Ovary (tissue), 10 donors: ENCODE measurements at regions of chr13 and their contacts with region 1.

Region 1: GRCh38 chr13:43786773-43787517 is at the start of gene ENOX1:
- DNase-seq: peak; percentile 76 to 88 (median 80)
- H3K4me3 ChIP-seq: peak within 1 kb of the TSS; percentile 85
- H3K27ac ChIP-seq: peak within 1 kb of the TSS; percentile 42 to 73
- H3K4me1 ChIP-seq: no peaks in the 10 kb centered on the region
- H3K27me3 ChIP-seq: no peaks in the 10 kb centered on the region
- CTCF ChIP-seq: peak; percentile 13 to 47 (median 13)
- EP300 ChIP-seq: no peak
- POLR2A ChIP-seq: no peak
- total RNA-seq, gene ENOX1: 3.6 to 17.5 (median 7.8) TPM

Region 2: DNA sequence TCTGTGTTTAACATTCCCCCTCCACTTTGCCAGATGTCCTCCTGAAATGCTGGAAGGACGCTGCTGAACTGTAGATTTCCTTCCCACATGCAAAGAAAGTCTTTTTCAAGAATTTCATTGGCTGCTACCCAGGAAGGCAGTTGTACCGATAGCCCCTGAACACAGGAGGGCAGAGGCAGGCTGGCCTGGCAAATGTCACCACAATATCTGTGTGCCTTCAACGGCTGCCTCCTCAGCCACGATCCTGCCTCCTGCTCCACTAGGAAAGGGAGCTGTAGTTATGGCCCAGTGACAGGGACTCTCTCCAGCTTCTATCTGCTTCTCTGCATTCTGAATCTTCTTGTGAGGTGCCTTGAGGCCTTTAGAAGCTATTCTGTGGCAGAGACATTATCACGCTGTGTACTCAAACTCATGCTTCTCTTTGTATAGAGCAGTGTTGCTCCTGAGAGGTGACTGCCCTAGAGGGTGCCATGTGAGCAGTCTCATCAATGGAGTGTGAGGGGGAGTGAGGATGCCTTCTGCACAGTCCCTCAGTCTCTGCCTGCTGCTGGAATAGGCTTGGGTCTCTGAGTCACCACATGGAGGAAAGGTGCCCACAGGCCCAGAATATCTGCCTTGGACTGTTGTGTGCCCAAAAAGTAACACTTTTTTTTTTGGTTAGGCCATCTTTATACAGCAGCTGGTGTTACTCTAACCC is 483.8 kb before region 1 on chr13:
- intact Hi-C with region 1: loop called in 2 of 4 experiments (anchors 10 kb)
- DNase-seq: peak; percentile 41 to 74 (median 58)
- H3K4me3 ChIP-seq: no peak overlapping the region
- H3K27ac ChIP-seq: peak overlapping the region in 1 of 2 donors; percentile 32
- H3K4me1 ChIP-seq: peaks cover 13% of the 10 kb centered on the region
- H3K27me3 ChIP-seq: no peaks in the 10 kb centered on the region
- CTCF ChIP-seq: peak in 1 of 3 donors; percentile 26
- EP300 ChIP-seq: no peak
- POLR2A ChIP-seq: no peak

Region 3: DNA sequence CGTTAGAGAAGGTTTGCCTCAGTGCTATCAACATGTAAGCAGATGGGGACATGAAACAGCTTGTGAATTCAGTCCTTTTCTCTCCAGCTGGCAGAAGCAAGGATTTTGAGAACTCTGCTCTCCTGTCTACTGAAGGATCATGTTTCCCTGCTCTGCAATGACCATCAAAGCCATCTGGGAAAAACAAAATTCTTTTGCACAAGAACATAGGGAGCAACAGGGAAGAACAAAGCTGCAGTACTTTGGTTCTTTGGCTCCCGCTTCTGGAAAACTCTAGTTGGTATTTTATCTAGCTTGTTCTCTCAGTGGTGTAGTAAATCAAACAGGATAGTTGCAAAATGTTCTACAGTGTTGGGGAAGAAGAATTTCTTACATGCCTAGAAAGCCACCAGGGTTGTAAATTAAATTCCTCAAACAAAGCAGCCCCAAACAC is 270.5 kb before region 1 on chr13:
- intact Hi-C with region 1: loop called in 1 of 4 experiments (anchors 10 kb)
- DNase-seq: peak in 2 of 5 donors; percentile 55 to 65
- H3K4me3 ChIP-seq: no peak overlapping the region
- H3K27ac ChIP-seq: peak overlapping the region in 1 of 2 donors; percentile 54
- H3K4me1 ChIP-seq: peaks cover 12% of the 10 kb centered on the region
- H3K27me3 ChIP-seq: no peaks in the 10 kb centered on the region
- CTCF ChIP-seq: peak in 1 of 3 donors; percentile 17
- EP300 ChIP-seq: no peak
- POLR2A ChIP-seq: no peak